H1 (cell line): ENCODE measurements at regions of chr14 and their contacts with region 1.

Region 1: DNA sequence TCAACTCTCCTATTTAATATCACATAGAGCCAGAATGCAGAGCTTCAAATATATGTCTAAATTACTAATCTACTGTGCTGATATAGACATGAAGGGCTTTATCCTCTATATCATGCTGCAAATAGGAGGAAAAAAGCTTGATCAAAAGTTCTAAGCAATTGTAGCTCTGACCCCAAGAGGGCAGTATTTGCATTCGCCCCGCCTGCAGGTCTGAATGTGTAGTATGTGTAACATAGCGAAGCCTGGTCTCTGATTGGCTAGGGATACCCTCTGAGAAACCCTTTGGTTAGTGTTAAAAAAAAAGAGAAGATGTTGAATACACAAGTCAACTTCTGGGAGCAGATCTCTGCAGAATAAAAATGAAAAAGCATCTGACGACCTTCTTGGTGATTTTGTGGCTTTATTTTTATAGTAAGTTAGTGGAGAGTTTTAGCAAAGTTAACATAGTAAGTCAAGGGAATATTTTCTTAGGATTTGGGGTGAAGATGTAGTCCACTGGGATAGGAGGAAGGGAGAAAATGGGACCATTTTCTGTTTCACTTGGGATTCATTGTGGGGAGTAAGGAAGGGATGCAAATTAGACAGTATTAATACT is 151.6 kb upstream of the OR4E1 start:
- DNase-seq: no peak
- H3K4me3 ChIP-seq: no peak overlapping the region
- H3K27ac ChIP-seq: no peak overlapping the region
- H3K4me1 ChIP-seq: no peaks in the 10 kb centered on the region
- H3K27me3 ChIP-seq: no peaks in the 10 kb centered on the region
- CTCF ChIP-seq: peak; percentile 39 to 93 (median 81)
- EP300 ChIP-seq: no peak
- POLR2A ChIP-seq: no peak
- RAD21 ChIP-seq: peak; percentile 40 to 52; a peak in 3 of 4 replicates

Region 2: GRCh38 chr14:21525962-21526671 is 299.1 kb before region 1 on chr14 and contains the start of gene SALL2:
- CTCF ChIA-PET with region 1: no interaction called
- POLR2A ChIA-PET with region 1: no interaction called
- DNase-seq: peak; percentile 93 to 97
- H3K4me3 ChIP-seq: peak within 1 kb of the TSS; percentile 50 to 82 (median 71)
- H3K27ac ChIP-seq: peak within 1 kb of the TSS; percentile 90
- H3K4me1 ChIP-seq: peaks cover 14 to 69% (median 42%) of the 10 kb centered on the region in 4 experiments
- H3K27me3 ChIP-seq: no peaks in the 10 kb centered on the region
- CTCF ChIP-seq: no peak
- EP300 ChIP-seq: peak in 1 of 2 experiments; percentile 87; a peak in 1 of 3 replicates
- POLR2A ChIP-seq: peak; percentile 36 to 85
- RAD21 ChIP-seq: peak in 1 of 2 experiments; percentile 16; a peak in 1 of 4 replicates
- total RNA-seq, gene SALL2: 346 and 360 TPM in 2 replicates

Region 3: DNA sequence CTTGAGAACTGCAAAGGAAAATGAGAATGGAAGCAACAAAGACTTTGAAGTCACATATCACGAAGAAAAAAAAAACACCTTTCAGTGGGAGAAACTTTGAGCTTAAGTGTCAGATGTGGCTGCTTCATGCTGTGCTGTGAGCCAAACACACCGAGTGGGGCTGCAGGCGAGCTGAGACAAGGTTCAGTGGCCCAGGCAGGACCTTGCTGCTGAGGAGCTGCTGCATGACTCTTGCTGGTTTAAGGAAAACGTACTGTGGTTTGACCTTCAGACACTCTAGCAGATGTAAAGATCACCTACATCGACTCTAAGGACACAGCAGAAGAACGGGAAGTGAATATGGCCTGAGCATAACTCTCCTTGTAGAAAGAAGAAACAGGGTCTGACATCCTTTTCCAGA is 33.5 kb before region 1 on chr14:
- CTCF ChIA-PET with region 1: interaction called, 10 read pairs
- POLR2A ChIA-PET with region 1: no interaction called
- DNase-seq: no peak
- H3K4me3 ChIP-seq: no peak overlapping the region
- H3K27ac ChIP-seq: no peak overlapping the region
- H3K4me1 ChIP-seq: no peaks in the 10 kb centered on the region
- H3K27me3 ChIP-seq: no peaks in the 10 kb centered on the region
- CTCF ChIP-seq: no peak
- EP300 ChIP-seq: no peak
- POLR2A ChIP-seq: no peak
- RAD21 ChIP-seq: no peak

Region 4: GRCh38 chr14:21807975-21808374 is 17.3 kb before region 1 on chr14:
- CTCF ChIA-PET with region 1: interaction called, 18 read pairs
- POLR2A ChIA-PET with region 1: interaction called, 3 read pairs
- DNase-seq: no peak
- H3K4me3 ChIP-seq: no peak overlapping the region
- H3K27ac ChIP-seq: no peak overlapping the region
- H3K4me1 ChIP-seq: no peaks in the 10 kb centered on the region
- H3K27me3 ChIP-seq: no peaks in the 10 kb centered on the region
- CTCF ChIP-seq: no peak
- EP300 ChIP-seq: no peak
- POLR2A ChIP-seq: no peak
- RAD21 ChIP-seq: 0 out of 4 replicates have a peak, but pooled peaks of 1 of the 2 experiments have one; percentile 4

Region 5: DNA sequence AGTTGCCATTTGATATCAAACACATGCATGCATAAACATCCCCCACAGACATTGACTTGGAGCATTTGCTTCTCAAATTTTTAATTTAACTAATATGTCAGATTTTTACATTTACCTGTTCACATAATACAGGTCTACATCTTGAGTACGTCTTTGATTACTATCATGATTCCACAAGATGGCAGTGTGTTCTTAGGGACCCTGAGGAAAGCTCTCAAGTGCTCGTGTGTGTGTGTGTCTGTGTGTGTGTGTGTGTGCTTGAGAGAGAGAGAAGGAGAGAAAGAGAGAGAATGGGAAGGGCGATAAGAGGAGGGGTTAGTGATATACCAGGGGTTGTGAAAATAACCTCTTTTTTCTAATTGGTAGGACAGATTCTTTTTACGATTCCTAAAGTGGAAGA is 15.5 kb after region 1 on chr14:
- CTCF ChIA-PET with region 1: interaction called, 30 read pairs
- POLR2A ChIA-PET with region 1: no interaction called
- DNase-seq: no peak
- H3K4me3 ChIP-seq: no peak overlapping the region
- H3K27ac ChIP-seq: no peak overlapping the region
- H3K4me1 ChIP-seq: no peaks in the 10 kb centered on the region
- H3K27me3 ChIP-seq: no peaks in the 10 kb centered on the region; a peak in 2 of 7 replicates
- CTCF ChIP-seq: peak in 2 of 3 experiments; percentile 28 to 30; a peak in 2 of 4 replicates
- EP300 ChIP-seq: no peak
- POLR2A ChIP-seq: no peak
- RAD21 ChIP-seq: peak; percentile 28 to 36; a peak in 3 of 4 replicates

Region 6: DNA sequence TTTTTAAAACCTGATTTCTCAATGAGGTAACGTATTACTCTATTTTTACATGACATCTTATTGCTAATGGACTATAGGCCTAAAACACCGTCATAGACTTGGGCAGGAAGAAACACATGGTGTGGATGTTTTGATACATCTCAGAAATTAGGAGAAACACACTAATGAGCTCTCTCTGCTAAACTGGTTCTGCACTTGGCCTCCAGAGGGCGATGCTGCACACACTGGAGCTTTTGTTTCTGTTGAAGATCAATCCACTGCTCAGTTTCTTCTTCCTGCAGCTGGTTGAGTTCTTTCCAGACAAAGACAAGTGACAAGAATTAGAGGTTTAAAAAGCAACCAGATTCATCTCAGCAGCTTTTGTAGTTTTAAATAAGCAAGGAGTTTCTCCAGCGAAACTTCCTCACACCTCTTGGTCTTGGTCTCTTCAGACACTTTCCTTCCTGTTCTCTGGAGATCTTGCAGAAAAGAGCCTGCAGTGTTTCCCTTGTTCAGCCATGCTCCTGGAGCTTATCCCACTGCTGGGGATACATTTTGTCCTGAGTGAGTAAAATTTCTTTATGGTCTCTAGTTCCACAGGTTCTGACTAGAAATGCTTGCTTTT is 26.9 kb after region 1 on chr14:
- CTCF ChIA-PET with region 1: interaction called, 10 read pairs
- POLR2A ChIA-PET with region 1: interaction called, 3 read pairs
- DNase-seq: peak; percentile 27 to 88
- H3K4me3 ChIP-seq: no peak overlapping the region
- H3K27ac ChIP-seq: no peak overlapping the region
- H3K4me1 ChIP-seq: no peaks in the 10 kb centered on the region
- H3K27me3 ChIP-seq: no peaks in the 10 kb centered on the region
- CTCF ChIP-seq: peak; percentile 65 to 92 (median 67)
- EP300 ChIP-seq: no peak
- POLR2A ChIP-seq: no peak
- RAD21 ChIP-seq: peak in 1 of 2 experiments; percentile 35; a peak in 1 of 4 replicates

Region 7: GRCh38 chr14:21860172-21860571 is 34.9 kb after region 1 on chr14:
- CTCF ChIA-PET with region 1: interaction called, 11 read pairs
- POLR2A ChIA-PET with region 1: no interaction called
- DNase-seq: peak in 1 of 2 experiments; percentile 67
- H3K4me3 ChIP-seq: no peak overlapping the region
- H3K27ac ChIP-seq: no peak overlapping the region
- H3K4me1 ChIP-seq: no peaks in the 10 kb centered on the region
- H3K27me3 ChIP-seq: no peaks in the 10 kb centered on the region
- CTCF ChIP-seq: peak in 2 of 3 experiments; percentile 56 to 66; a peak in 3 of 4 replicates
- EP300 ChIP-seq: no peak
- POLR2A ChIP-seq: no peak
- RAD21 ChIP-seq: peak; percentile 33 to 50; a peak in 3 of 4 replicates

Region 8: GRCh38 chr14:21978184-21978998 is 153.1 kb after region 1 on chr14:
- CTCF ChIA-PET with region 1: interaction called, 11 read pairs
- POLR2A ChIA-PET with region 1: no interaction called
- DNase-seq: peak in 1 of 2 experiments; percentile 84
- H3K4me3 ChIP-seq: no peak overlapping the region
- H3K27ac ChIP-seq: no peak overlapping the region
- H3K4me1 ChIP-seq: no peaks in the 10 kb centered on the region
- H3K27me3 ChIP-seq: peaks cover 0 to 1% (median 0%) of the 10 kb centered on the region in 4 experiments; a peak in 1 of 7 replicates
- CTCF ChIP-seq: peak; percentile 81 to 93 (median 89)
- EP300 ChIP-seq: no peak
- POLR2A ChIP-seq: no peak
- RAD21 ChIP-seq: peak; percentile 61 to 65